Activated T-helper 2 cell treated with anti-CD3 and anti-CD28 coated beads, Interferon-gamma antibody, Interleukin-2, Interleukin-4, amounts not matched to agents 10 μg/mL and 5 μg/mL and 100 μg/mL, durations not matched to agents 14 hours and 24 hours and 36 hours (primary cell): ENCODE measurements at regions of chr19 and their contacts with region 1.

Region 1: GRCh38 chr19:45952686-45953505 is 20.8 kb downstream of the NOVA2 start:
- DNase-seq: peak; percentile 37
- H3K4me3 Mint-ChIP-seq: peak overlapping the region; percentile 63
- H3K27ac Mint-ChIP-seq: no peak overlapping the region
- H3K4me1 Mint-ChIP-seq: peaks cover 14% of the 10 kb centered on the region
- H3K27me3 Mint-ChIP-seq: peaks cover 6% of the 10 kb centered on the region

Region 2: DNA sequence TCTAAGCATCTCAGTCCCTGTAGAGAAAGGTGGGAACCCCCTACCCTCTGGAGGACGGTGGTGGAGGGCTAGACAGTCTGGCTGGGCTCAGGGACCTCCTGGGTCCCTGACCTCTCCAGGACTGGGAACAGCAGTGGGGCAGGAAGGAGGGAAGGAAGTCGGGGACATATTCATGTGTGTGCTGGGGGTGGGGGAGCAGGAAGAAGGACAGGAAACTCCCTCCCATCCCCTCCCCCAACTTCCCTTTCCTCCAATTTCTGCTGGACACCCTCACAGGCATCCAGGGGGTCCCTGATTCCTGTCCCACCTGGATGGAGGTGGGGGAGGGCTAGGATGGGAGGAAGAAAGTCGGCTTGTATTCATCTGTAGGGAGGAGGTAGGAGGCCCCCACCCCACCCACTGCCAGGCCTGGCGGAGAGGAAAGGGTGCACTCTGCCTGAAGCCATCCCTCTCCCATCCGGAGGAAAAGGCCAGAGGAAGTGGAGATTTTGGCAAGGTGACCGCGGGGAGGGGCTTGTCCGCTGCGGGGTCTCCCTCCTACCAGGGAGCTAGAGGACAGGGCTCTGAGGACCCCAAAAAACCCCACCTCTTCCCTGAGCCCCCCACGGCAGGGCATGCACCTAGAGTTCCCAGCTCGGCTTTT is 18.5 kb after region 1 on chr19:
- intact Hi-C with region 1: loop called (anchors 2 kb)
- DNase-seq: no peak
- H3K4me3 Mint-ChIP-seq: no peak overlapping the region
- H3K27ac Mint-ChIP-seq: no peak overlapping the region
- H3K4me1 Mint-ChIP-seq: peaks cover 14% of the 10 kb centered on the region
- H3K27me3 Mint-ChIP-seq: peaks cover 54% of the 10 kb centered on the region